AG04450 (cell line): ENCODE measurements at regions of chr16 and their contacts with region 1.

Region 1: DNA sequence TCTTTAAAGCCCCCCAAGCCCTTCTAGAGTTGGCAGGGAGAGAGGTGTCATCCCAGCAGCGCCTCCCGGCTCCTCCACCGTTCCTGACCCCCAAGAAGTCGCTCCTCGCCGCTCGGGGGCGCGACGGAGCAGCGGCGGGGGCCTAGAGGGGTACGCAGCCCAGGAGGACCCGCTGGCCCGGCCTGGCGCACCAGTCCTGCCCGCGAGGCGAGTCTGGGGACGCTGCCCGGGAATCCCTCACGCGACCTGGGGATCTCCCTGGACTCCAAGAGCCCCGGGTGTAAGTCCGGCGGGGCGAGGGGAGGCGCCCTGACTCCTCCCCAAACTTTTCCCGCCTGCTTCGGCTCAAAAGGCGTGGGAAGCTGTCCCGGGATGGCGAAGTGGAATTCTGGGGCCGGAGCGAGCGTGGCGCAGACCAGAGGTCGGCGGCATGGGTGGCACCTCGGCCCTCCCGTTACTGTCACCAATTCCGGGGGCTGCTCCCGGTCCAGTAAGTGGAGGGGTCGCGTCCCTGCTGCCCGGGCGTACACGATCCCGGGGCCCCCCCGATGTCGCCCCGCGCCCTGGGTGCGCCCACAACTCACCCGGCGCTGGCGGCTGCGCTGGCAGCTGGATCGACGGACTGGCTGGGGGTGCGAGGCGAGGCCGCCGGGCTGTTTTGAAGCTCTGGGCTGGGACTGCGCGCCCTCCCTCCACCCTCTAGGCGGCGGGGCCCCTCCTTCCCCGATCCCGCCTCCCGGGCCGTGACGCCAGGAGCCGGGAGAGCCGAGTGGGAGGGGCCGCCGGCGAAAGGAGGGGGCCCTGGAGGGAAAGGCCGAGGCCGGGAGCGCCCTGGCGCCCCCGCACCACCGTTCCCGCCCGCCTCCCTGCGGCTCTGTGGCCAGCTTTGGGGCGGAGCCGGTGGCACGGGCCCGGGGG is at the start of gene EMP2:
- DNase-seq: peak; percentile 30
- H3K4me3 ChIP-seq: peak within 1 kb of the TSS; percentile 86
- H3K27ac ChIP-seq: peak within 1 kb of the TSS; percentile 39
- H3K27me3 ChIP-seq: no peaks in the 10 kb centered on the region
- CTCF ChIP-seq: peak; percentile 71
- polyA plus RNA-seq, gene EMP2: 15.1 and 15.2 TPM in 2 replicates

Region 2: DNA sequence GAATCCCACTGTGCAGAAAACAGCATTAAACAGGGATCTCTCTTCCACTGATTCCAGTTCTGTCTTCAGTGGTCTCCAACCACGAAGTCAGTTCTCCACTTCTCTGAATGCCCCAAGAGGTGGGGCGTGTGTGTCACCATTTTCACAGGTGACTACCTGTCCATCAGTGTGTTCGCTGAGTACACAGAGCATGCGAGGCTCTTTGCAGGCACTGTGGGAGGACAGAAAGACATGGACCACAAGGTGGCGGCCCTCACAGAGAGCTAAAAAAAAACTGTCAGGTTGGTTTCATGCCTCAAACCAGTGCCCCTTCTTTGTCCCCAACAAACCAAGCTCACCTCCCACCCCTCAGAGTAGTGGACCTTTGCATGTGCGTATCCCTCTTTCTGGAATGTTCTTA is 13.6 kb before region 1 on chr16:
- CTCF ChIA-PET with region 1: interaction called, 15 read pairs
- POLR2A ChIA-PET with region 1: no interaction called
- DNase-seq: no peak
- H3K4me3 ChIP-seq: no peak overlapping the region
- H3K27ac ChIP-seq: no peak overlapping the region
- H3K27me3 ChIP-seq: no peaks in the 10 kb centered on the region
- CTCF ChIP-seq: no peak

Region 3: DNA sequence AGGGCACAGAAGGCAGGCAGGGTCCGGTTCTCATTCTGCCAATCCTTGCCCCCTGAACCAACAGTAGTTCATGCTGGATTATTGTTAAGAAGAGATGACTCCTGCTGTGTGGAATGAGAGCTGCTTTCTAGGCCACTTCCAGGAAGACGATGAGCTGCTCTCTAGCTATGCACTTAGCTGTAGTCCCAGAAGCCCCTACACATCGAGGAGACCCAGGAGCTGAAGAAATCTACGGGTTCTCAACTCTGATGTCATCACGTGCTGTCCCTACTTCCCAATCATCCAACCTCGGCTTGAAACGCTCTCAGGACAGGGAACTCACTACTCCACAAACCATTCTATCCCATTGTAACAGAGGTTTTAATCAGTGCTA is 29.2 kb after region 1 on chr16:
- CTCF ChIA-PET with region 1: interaction called, 22 read pairs
- POLR2A ChIA-PET with region 1: interaction called, 13 read pairs
- DNase-seq: peak; percentile 72
- H3K4me3 ChIP-seq: no peak overlapping the region
- H3K27ac ChIP-seq: peak overlapping the region; percentile 47
- H3K27me3 ChIP-seq: no peaks in the 10 kb centered on the region
- CTCF ChIP-seq: 0 out of 2 replicates have a peak, but pooled peaks have one; percentile 6